Naive thymus-derived CD4-positive, alpha-beta T cell (primary cell): ENCODE measurements at regions of chr2 and their contacts with region 1.

Region 1: DNA sequence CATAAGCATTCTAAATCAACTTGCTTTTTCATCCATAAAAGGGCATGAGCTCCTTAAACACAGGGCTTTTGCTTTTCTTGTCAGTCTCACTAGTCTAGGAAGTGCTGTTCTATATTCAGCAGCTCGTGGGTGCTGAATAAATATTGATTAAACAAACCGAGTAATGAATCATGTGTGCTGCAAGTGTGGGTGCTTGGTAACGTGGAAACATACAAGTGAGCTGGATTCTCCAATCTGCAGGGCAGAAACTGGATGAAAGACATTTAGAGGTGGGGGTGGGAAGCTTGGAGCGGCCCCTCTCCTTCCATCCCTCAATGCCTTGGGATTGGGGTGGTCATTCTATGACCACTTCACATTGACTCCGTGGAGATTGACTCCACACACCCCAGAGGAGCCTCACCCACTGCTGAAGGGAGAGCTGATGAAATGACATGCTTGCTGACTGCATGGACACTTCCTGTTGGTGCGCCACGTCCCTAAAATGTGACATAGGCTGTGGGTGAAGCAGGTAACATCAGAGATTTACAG is 114.6 kb downstream of the DOCK10 start:
- DNase-seq: peak; percentile 18 to 91 (median 85)
- ATAC-seq: peak; percentile 89
- H3K4me3 ChIP-seq: no peak overlapping the region
- H3K4me3 Mint-ChIP-seq: peak overlapping the region; percentile 48 to 85 (median 74)
- H3K27ac ChIP-seq: peak overlapping the region; percentile 86
- H3K27ac Mint-ChIP-seq: peak overlapping the region; percentile 87 to 99 (median 96)
- H3K4me1 ChIP-seq: peaks cover 81 to 95% of the 10 kb centered on the region in 2 donors
- H3K4me1 Mint-ChIP-seq: peaks cover 85 to 99% (median 98%) of the 10 kb centered on the region in 7 donors
- H3K27me3 ChIP-seq: no peaks in the 10 kb centered on the region
- H3K27me3 Mint-ChIP-seq: no peaks in the 10 kb centered on the region

Region 2: DNA sequence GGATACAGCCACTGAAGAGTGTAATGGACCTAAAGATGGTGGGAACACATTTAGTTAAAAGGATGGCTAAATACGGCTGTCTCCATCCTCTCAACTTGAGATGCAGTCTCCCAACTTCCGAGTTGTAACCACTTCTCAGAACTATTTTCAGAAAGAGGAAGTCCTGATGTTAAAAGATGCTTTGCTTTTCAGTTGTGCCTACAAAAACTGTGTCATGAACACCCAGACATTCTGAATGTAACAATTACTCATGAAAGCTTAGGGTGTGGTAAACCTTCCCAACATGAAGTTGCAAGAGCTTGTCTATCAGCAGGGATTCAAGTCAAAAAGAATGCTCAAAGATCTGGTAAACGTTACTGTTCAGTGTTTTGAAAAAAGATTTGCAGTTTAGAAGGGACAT is 33.4 kb before region 1 on chr2:
- CTCF ChIA-PET with region 1: no interaction called
- POLR2A ChIA-PET with region 1: interaction called, 6 read pairs
- intact Hi-C with region 1: loop called (anchors 2 to 5 kb)
- DNase-seq: peak in 4 of 9 donors; percentile 8 to 21 (median 10)
- ATAC-seq: peak; percentile 80
- H3K4me3 ChIP-seq: no peak overlapping the region
- H3K4me3 Mint-ChIP-seq: peak overlapping the region in 6 of 10 donors; percentile 8 to 75 (median 58)
- H3K27ac ChIP-seq: no peak overlapping the region
- H3K27ac Mint-ChIP-seq: peak overlapping the region; percentile 5 to 92 (median 69)
- H3K4me1 ChIP-seq: peaks cover 12 to 16% of the 10 kb centered on the region in 2 donors
- H3K4me1 Mint-ChIP-seq: peaks cover 35 to 76% (median 63%) of the 10 kb centered on the region in 7 donors
- H3K27me3 ChIP-seq: no peaks in the 10 kb centered on the region
- H3K27me3 Mint-ChIP-seq: no peaks in the 10 kb centered on the region

Region 3: DNA sequence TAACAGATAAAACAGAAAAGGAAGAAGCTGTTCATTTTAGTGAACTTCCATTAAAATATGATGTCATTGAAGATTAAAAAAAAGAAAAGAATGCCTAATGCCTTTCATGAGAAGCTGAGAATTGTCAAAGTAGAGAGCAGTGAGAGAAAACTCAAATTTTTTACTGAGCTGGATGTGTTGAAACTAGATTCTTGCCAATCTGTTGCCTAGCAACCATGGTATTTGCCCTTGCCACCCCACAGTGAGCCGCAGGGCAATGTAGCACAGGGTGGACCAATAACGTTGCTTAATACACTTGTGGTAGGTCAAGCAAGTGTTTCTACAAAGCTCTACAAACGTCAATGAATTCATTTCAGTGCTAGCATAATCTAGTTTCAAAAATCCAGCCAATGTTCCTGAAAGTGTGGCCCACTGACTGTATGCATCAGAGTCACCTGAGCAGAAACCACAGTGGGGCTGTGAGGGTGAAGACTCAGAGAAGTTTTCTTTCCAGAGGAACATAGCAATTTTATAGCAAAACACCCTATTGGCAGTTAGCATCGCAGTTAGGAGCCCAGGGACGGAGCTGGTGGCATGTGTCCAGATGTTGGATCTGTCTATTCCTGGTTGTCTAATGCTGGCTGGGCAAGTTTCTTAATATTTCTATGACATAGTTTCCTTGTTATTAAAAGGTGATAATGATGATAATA is 17.7 kb before region 1 on chr2:
- CTCF ChIA-PET with region 1: no interaction called
- POLR2A ChIA-PET with region 1: no interaction called
- intact Hi-C with region 1: loop called in 1 of 2 experiments (anchors 2 kb)
- DNase-seq: peak in 1 of 9 donors; percentile 27
- ATAC-seq: peak; percentile 91
- H3K4me3 ChIP-seq: no peak overlapping the region
- H3K4me3 Mint-ChIP-seq: peak overlapping the region in 7 of 10 donors; percentile 2 to 51 (median 14)
- H3K27ac ChIP-seq: no peak overlapping the region
- H3K27ac Mint-ChIP-seq: peak overlapping the region; percentile 48 to 85 (median 68)
- H3K4me1 ChIP-seq: peaks cover 8% of the 10 kb centered on the region in 2 donors
- H3K4me1 Mint-ChIP-seq: peaks cover 41 to 77% (median 67%) of the 10 kb centered on the region in 7 donors
- H3K27me3 ChIP-seq: no peaks in the 10 kb centered on the region
- H3K27me3 Mint-ChIP-seq: no peaks in the 10 kb centered on the region

Region 4: GRCh38 chr2:224938651-224939182 is 11.0 kb after region 1 on chr2:
- CTCF ChIA-PET with region 1: interaction called, 16 read pairs
- POLR2A ChIA-PET with region 1: interaction called, 33 read pairs
- intact Hi-C with region 1: loop called (anchors 1 kb)
- DNase-seq: peak in 1 of 9 donors; percentile 56
- ATAC-seq: peak; percentile 56
- H3K4me3 ChIP-seq: no peak overlapping the region
- H3K4me3 Mint-ChIP-seq: peak overlapping the region; percentile 46 to 81 (median 68)
- H3K27ac ChIP-seq: peak overlapping the region; percentile 62
- H3K27ac Mint-ChIP-seq: peak overlapping the region; percentile 78 to 92 (median 86)
- H3K4me1 ChIP-seq: peaks cover 44 to 62% of the 10 kb centered on the region in 2 donors
- H3K4me1 Mint-ChIP-seq: peaks cover 60 to 100% (median 84%) of the 10 kb centered on the region in 7 donors
- H3K27me3 ChIP-seq: no peaks in the 10 kb centered on the region
- H3K27me3 Mint-ChIP-seq: no peaks in the 10 kb centered on the region

Region 5: DNA sequence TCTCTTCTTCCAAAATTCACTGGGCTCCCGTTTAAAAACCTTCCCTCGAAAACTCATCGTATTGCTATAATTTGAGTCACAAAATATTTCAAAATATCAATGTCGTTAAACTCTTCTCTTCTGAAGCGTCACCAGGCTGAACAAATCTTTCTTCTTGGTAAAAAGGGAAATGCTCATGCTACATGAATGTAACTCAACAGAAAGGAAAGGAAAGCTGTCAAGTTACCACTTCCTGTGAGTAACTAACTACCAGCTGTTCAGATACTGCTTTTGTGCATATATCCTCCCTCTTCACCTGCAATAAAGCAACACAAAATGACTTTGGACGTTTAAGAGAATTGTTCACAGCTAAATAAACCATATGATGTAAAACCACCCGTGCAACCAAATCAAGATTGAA is 19.2 kb after region 1 on chr2:
- CTCF ChIA-PET with region 1: interaction called, 6 read pairs
- POLR2A ChIA-PET with region 1: interaction called, 33 read pairs
- intact Hi-C with region 1: loop called in 1 of 2 experiments (anchors 1 kb)
- DNase-seq: peak in 7 of 9 donors; percentile 60 to 82 (median 77)
- ATAC-seq: peak; percentile 90
- H3K4me3 ChIP-seq: peak overlapping the region; percentile 59
- H3K4me3 Mint-ChIP-seq: peak overlapping the region; percentile 79 to 99 (median 91)
- H3K27ac ChIP-seq: peak overlapping the region; percentile 84
- H3K27ac Mint-ChIP-seq: peak overlapping the region; percentile 68 to 98 (median 92)
- H3K4me1 ChIP-seq: peaks cover 52 to 69% of the 10 kb centered on the region in 2 donors
- H3K4me1 Mint-ChIP-seq: peaks cover 54 to 91% (median 79%) of the 10 kb centered on the region in 7 donors
- H3K27me3 ChIP-seq: no peaks in the 10 kb centered on the region
- H3K27me3 Mint-ChIP-seq: no peaks in the 10 kb centered on the region

Region 6: GRCh38 chr2:224982910-224983711 is 55.4 kb after region 1 on chr2:
- CTCF ChIA-PET with region 1: interaction called, 4 read pairs
- POLR2A ChIA-PET with region 1: interaction called, 5 read pairs
- intact Hi-C with region 1: loop called (anchors 1 to 2 kb)
- DNase-seq: peak in 7 of 9 donors; percentile 44 to 66 (median 52)
- ATAC-seq: peak; percentile 74
- H3K4me3 ChIP-seq: no peak overlapping the region
- H3K4me3 Mint-ChIP-seq: peak overlapping the region; percentile 63 to 85 (median 77)
- H3K27ac ChIP-seq: peak overlapping the region; percentile 50
- H3K27ac Mint-ChIP-seq: peak overlapping the region; percentile 85 to 97 (median 92)
- H3K4me1 ChIP-seq: peaks cover 42 to 58% of the 10 kb centered on the region in 2 donors
- H3K4me1 Mint-ChIP-seq: peaks cover 55 to 91% (median 89%) of the 10 kb centered on the region in 7 donors
- H3K27me3 ChIP-seq: no peaks in the 10 kb centered on the region
- H3K27me3 Mint-ChIP-seq: no peaks in the 10 kb centered on the region

Region 7: DNA sequence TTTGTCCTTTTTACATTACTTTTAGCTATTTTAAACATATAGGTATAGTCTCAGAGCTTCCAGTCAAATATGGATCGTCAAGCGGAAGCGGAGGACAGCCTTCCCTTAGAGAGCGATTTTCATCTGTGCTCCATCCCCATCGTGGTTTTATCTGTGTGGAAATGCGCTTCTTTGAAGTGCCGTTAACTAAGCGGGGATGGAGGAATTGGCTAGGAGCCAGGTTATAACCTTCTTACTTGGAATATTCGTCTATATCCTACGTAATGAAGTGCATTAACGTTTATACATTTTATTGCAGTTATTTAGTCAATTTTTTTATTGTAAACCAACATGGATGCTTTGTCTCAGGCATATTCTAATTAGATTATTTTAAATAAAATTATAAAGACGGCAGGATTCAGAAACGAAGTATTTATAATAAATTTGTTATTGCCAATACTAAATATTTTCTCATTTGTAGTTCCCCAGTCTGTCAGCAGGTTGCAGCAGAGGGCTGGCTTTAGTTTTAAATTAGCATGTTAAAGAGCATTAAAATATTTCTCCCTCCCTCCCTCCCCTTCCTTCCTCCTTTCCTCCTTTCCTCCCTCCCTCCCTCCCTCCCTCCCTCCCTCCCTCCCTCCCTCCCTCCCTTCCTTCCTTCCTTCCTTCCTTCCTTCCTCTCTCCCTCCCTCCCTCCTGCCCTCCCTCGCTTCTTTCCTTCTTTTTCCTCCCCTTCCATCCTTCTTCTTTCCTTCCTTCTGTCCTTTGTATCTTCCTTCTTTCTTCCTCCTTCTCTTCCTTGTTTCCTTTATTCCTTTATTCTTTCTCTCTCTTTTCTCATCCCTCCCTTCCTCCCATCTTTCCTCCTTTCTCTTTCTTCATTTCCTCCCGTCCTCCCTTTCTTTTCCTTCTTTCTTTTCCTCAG is 195.1 kb after region 1 on chr2:
- CTCF ChIA-PET with region 1: no interaction called
- POLR2A ChIA-PET with region 1: no interaction called
- intact Hi-C with region 1: loop called in 1 of 2 experiments (anchors 5 kb)
- DNase-seq: peak in 4 of 9 donors; percentile 15 to 28 (median 22)
- ATAC-seq: no peak
- H3K4me3 ChIP-seq: no peak overlapping the region
- H3K4me3 Mint-ChIP-seq: peak overlapping the region in 1 of 10 donors; percentile 48
- H3K27ac ChIP-seq: no peak overlapping the region
- H3K27ac Mint-ChIP-seq: peak overlapping the region in 4 of 9 donors; percentile 12 to 83 (median 44)
- H3K4me1 ChIP-seq: no peaks in the 10 kb centered on the region
- H3K4me1 Mint-ChIP-seq: peaks cover 0 to 13% (median 5%) of the 10 kb centered on the region in 7 donors
- H3K27me3 ChIP-seq: no peaks in the 10 kb centered on the region
- H3K27me3 Mint-ChIP-seq: peaks cover 0 to 14% (median 7%) of the 10 kb centered on the region in 5 donors